Heart left ventricle (tissue), 16 donors: ENCODE measurements at regions of chr6 and their contacts with region 1.

Region 1: DNA sequence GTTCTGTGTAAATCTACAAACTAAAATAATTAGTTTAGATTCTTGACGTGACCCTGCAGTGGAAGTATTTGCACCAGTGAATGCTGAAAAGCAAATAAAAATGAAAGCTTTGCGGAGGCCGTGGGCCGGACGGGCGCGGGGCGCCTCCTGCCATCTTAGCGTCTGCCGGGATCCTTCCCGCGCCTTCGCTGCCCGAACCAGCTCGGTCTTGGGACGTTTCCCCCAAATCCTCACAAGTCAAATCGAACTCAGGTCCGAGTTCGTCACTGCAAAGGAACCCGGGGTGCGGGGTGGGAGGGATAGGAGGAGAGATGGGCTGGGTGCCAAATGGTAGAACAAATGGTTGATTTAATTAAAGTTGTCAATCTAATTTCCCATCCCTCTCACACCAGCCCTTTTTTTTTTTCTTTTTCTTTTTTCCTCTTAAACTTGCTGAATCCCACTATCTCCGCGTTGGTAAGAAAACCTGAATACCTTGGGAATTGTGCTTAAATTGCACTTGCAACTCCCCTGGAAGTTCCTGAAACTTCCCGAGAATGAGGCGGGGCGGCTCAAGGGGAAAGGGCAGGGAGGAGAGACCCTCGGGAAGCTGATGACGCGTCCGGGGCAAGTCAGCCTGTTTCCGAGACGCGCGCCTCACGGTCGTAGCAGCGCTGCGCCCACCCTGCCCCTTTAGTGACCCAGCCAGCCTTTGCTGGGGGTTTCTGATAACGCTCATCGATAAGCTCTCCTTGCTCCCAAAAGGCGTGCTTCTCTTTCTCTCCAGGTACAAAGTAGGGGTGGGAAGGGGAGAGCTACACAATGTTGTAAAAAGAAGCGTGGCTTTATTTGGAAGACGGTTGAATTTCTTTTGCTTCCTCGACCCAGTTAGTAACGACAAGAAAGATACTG is 1.8 kb downstream of the GJA1 start:
- DNase-seq: peak; percentile 59 to 72 (median 66)
- ATAC-seq: peak in 3 of 4 donors; percentile 46 to 66 (median 54)
- H3K4me3 ChIP-seq: peak overlapping the region; percentile 47 to 86 (median 72)
- H3K27ac ChIP-seq: peak overlapping the region; percentile 82 to 95 (median 92)
- H3K4me1 ChIP-seq: peaks cover 0 to 42% (median 6%) of the 10 kb centered on the region in 12 donors
- H3K27me3 ChIP-seq: peaks cover 0 to 22% (median 0%) of the 10 kb centered on the region in 9 donors
- CTCF ChIP-seq: no peak
- POLR2A ChIP-seq: no peak

Region 2: GRCh38 chr6:121067381-121067780 is 369.8 kb before region 1 on chr6:
- intact Hi-C with region 1: no loop called
- DNase-seq: no peak
- ATAC-seq: no peak
- H3K4me3 ChIP-seq: no peak overlapping the region
- H3K27ac ChIP-seq: no peak overlapping the region
- H3K4me1 ChIP-seq: no peaks in the 10 kb centered on the region
- H3K27me3 ChIP-seq: no peaks in the 10 kb centered on the region
- CTCF ChIP-seq: no peak
- POLR2A ChIP-seq: no peak

Region 3: GRCh38 chr6:121485359-121485811 is 48.2 kb after region 1 on chr6:
- intact Hi-C with region 1: no loop called
- DNase-seq: no peak
- ATAC-seq: no peak
- H3K4me3 ChIP-seq: no peak overlapping the region
- H3K27ac ChIP-seq: no peak overlapping the region
- H3K4me1 ChIP-seq: no peaks in the 10 kb centered on the region
- H3K27me3 ChIP-seq: no peaks in the 10 kb centered on the region
- CTCF ChIP-seq: no peak
- POLR2A ChIP-seq: no peak

Region 4: DNA sequence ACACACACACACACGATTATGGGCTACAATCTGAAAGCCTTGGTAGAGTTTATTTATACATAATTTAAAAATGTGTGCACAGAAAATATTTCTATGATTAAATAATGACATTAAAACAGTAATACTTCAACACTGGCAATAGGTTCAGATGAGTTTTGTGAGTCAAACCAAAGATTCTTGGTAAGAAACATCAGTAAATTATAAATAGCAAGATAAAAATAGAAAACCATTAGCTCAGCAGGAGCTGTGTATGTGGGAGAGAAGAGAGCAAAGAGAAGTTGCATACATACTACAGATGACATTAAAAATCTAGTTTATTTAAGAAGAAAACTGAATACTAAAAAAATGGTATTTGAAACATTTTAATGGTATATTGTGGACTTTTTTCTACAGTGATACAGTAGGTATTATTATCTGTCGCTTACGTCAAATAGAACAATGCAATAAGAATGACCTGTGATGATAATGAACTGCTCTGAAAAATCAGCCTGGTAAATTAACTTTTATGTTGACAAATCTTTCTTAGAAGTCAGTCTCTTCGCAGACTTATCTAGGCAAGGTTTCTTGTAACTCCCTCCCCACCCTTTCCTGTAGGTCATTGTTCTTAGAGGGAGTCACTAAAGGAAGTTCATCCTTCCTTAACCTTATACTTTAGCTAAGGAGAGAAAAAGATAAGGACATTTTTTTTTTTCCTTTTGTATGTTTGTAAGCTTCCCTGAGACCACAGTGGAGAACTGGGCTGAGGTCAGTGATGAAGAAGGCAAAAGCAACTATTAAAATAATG is 147.6 kb after region 1 on chr6:
- intact Hi-C with region 1: loop called in 6 of 10 experiments (anchors 5 to 10 kb)
- DNase-seq: no peak
- ATAC-seq: peak; percentile 58 to 79 (median 71)
- H3K4me3 ChIP-seq: no peak overlapping the region
- H3K27ac ChIP-seq: peak overlapping the region in 10 of 12 donors; percentile 37 to 64 (median 54)
- H3K4me1 ChIP-seq: peaks cover 0 to 23% (median 8%) of the 10 kb centered on the region in 12 donors
- H3K27me3 ChIP-seq: no peaks in the 10 kb centered on the region
- CTCF ChIP-seq: no peak
- POLR2A ChIP-seq: no peak

Region 5: GRCh38 chr6:121627761-121628160 is 190.6 kb after region 1 on chr6:
- intact Hi-C with region 1: no loop called
- DNase-seq: no peak
- ATAC-seq: no peak
- H3K4me3 ChIP-seq: no peak overlapping the region
- H3K27ac ChIP-seq: no peak overlapping the region
- H3K4me1 ChIP-seq: peaks cover 0 to 3% (median 0%) of the 10 kb centered on the region in 12 donors
- H3K27me3 ChIP-seq: no peaks in the 10 kb centered on the region
- CTCF ChIP-seq: no peak
- POLR2A ChIP-seq: no peak

Region 6: GRCh38 chr6:121666814-121667213 is 229.6 kb after region 1 on chr6:
- intact Hi-C with region 1: loop called in 4 of 10 experiments (anchors 5 to 10 kb)
- DNase-seq: no peak
- ATAC-seq: peak; percentile 93 to 96 (median 95)
- H3K4me3 ChIP-seq: no peak overlapping the region
- H3K27ac ChIP-seq: peak overlapping the region in 11 of 12 donors; percentile 18 to 74 (median 47)
- H3K4me1 ChIP-seq: peaks cover 0 to 17% (median 12%) of the 10 kb centered on the region in 12 donors
- H3K27me3 ChIP-seq: no peaks in the 10 kb centered on the region
- CTCF ChIP-seq: no peak
- POLR2A ChIP-seq: no peak

Region 7: DNA sequence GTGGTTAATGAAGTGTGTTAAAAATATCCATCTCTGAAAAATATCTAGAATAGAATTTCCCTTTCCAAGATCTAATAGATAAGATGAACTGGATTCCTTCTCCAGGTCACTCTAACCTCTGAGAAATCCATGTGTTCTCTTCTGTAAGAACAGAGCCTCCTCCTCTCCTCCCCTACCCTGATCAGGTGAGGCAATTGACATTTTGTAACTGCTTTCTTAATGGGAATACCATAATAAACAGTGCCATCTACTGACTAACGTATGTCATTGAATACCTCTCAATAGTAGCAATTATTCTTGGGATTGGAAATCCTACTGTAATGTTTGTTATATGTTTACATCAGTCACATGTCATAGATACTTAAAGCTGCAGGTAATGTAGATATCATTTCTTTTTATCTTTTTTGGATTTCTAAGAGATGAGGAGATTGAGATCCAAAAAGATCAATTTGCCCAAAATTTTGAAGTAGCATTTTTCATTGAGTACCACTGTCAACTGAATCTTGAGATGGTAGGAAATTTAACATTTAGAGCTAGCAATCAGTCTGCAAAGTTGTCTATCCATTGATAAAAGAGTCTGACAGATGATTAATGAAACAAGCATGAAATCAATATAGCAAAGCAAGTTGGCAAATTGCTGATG is 596.5 kb after region 1 on chr6:
- intact Hi-C with region 1: loop called in 4 of 10 experiments (anchors 2 to 5 kb)
- DNase-seq: no peak
- ATAC-seq: peak; percentile 71 to 90 (median 86)
- H3K4me3 ChIP-seq: no peak overlapping the region
- H3K27ac ChIP-seq: peak overlapping the region in 3 of 12 donors; percentile 6 to 30 (median 9)
- H3K4me1 ChIP-seq: peaks cover 0 to 8% (median 0%) of the 10 kb centered on the region in 12 donors
- H3K27me3 ChIP-seq: no peaks in the 10 kb centered on the region
- CTCF ChIP-seq: peak; percentile 48 to 77 (median 63)
- POLR2A ChIP-seq: no peak

Region 8: DNA sequence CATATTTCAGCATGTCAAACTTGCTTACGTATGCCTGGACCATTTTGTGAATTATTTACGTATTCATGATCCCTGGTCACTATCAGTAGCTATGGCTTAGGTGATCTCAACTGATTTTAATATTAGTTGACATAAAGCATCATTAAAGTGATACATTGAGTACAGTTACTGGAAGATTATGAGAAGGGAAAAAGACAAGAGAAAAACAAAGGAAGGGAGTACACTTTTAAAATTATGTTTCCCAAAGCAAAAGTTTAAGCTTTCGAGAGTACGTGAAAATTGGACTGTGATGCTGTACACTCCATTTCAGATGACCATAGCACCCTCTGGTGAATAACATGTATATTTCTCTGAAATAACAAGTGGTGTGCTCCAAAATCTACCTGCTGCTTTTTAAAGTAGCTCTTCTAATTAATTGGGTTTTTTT is 747.2 kb after region 1 on chr6:
- intact Hi-C with region 1: loop called in 3 of 10 experiments (anchors 2 to 5 kb)
- DNase-seq: no peak
- ATAC-seq: peak; percentile 51 to 83 (median 74)
- H3K4me3 ChIP-seq: peak overlapping the region in 7 of 12 donors; percentile 22 to 43 (median 34)
- H3K27ac ChIP-seq: no peak overlapping the region
- H3K4me1 ChIP-seq: peaks cover 0 to 10% (median 0%) of the 10 kb centered on the region in 12 donors
- H3K27me3 ChIP-seq: no peaks in the 10 kb centered on the region
- CTCF ChIP-seq: peak; percentile 16 to 61 (median 49)
- POLR2A ChIP-seq: no peak